ENCODE measurements at regions of chr12 and their contacts with region 1.

Region 1: GRCh38 chr12:57063991-57064685 is 14.2 kb upstream of the MYO1A start:
- DNase-seq: no peak
- H3K4me3 Mint-ChIP-seq: no peak overlapping the region
- H3K27ac Mint-ChIP-seq: no peak overlapping the region
- H3K4me1 Mint-ChIP-seq: no peaks in the 10 kb centered on the region
- H3K27me3 Mint-ChIP-seq: no peaks in the 10 kb centered on the region
- CTCF ChIP-seq: no peak

Region 2: DNA sequence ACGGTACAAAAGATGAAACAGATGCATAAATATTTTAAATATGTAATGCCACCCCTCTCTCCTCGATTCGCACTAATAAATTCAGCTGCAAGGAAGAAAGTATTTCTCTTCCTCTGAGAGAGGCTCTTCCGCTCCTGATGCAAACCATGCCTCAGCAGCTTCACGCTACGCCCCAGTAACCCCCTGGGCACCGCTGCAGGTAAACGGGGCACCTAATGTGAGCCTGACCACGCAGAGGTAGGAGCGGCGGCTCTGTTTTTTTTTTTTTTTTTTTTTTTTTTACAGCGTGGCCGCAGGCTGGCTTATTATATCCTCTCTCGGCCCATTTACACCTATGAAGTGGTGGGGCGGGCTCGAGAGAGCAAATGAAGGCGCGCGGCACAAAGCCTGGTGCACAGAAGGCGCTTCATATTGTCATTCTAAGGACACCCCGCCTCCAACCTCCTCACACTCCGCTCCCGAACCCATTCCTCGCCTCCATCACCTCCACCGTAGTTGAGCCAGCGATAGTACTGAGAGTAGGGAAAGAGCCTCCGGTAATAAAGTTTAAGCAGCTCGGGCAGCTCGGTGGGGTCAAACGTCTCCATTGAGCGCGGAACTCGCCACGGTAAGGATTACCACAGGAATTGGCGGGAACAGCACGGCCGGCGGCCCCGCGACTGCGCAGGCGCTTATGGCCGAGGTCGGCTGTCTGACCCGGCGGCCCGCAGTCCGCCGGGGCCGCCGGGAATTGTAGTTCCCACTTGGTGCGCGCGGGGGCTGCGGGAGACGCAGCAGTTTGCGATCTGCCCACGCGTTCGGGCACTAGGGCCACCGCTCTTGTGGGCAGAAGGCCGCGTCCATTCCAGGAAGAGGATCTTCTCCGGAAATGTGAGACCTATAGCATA is 312.2 kb before region 1 on chr12 and contains the start of gene PRIM1:
- CTCF ChIA-PET with region 1: interaction called, 5 read pairs
- POLR2A ChIA-PET with region 1: no interaction called
- intact Hi-C with region 1: loop called (anchors 1 kb)
- DNase-seq: peak; percentile 80
- H3K4me3 Mint-ChIP-seq: peak within 1 kb of the TSS; percentile 87
- H3K27ac Mint-ChIP-seq: peak within 1 kb of the TSS; percentile 59
- H3K4me1 Mint-ChIP-seq: peaks cover 20% of the 10 kb centered on the region
- H3K27me3 Mint-ChIP-seq: no peaks in the 10 kb centered on the region
- CTCF ChIP-seq: peak; percentile 63
- total RNA-seq, gene PRIM1: 3.5 and 7.8 TPM in 2 replicates

Region 3: DNA sequence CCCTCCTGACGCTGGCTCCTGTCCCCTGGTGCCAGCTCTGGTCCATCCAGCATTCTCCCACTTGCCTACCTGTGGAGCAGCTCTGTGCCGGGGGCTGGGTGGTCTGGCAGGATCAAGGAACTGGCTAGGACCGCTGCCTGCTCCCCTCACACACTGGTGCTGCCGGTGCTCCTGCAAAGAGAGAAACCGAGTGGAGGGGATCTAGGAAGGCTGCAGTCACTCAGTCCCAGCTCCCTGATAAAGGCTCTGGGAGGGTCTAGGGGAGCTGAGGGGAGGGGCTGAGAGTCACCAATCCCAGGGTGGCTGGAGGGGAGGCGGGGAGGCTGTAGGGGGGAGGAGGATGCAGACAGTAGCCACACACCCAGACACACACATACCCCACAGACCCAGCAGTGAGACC is 47.8 kb before region 1 on chr12 and contains the start of gene TAC3:
- CTCF ChIA-PET with region 1: interaction called, 231 read pairs
- POLR2A ChIA-PET with region 1: no interaction called
- intact Hi-C with region 1: no loop called
- DNase-seq: no peak
- H3K4me3 Mint-ChIP-seq: no peak within 1 kb of the TSS
- H3K27ac Mint-ChIP-seq: no peak within 1 kb of the TSS
- H3K4me1 Mint-ChIP-seq: no peaks in the 10 kb centered on the region
- H3K27me3 Mint-ChIP-seq: peaks cover 40% of the 10 kb centered on the region
- CTCF ChIP-seq: no peak
- total RNA-seq, gene TAC3: not detected in 2 replicates

Region 4: DNA sequence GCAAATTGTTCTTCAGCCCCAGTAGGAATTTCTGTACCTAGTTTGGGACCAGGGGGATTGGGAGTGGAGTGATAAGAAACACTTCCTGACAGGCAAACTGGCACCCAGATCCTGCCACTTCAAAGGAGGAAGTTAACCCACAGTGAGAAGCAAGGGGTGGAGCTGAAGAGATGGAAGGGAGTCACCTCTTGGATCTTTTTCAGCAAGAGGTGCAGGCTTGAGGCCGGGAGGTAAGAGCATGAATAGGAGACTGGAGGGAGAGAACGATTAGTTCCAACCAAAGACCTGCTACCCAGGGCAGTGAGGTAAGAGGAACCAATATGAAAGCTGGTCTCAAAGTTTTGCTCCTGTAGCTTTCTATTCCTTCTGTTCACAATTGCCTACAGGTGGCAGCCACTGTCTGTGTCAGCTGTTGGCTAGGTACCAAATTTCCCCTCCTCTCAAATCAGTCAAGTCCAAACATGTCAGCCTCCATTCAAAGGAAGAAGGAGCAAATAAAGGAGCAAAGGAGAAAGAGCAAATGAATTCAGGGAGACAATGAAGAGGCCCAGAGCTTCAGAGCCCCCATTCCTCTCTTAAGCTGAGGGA is 32.9 kb before region 1 on chr12:
- CTCF ChIA-PET with region 1: interaction called, 71 read pairs
- POLR2A ChIA-PET with region 1: interaction called, 21 read pairs
- intact Hi-C with region 1: no loop called
- DNase-seq: peak; percentile 81
- H3K4me3 Mint-ChIP-seq: peak overlapping the region; percentile 41
- H3K27ac Mint-ChIP-seq: peak overlapping the region; percentile 76
- H3K4me1 Mint-ChIP-seq: peaks cover 30% of the 10 kb centered on the region
- H3K27me3 Mint-ChIP-seq: peaks cover 21% of the 10 kb centered on the region
- CTCF ChIP-seq: no peak

Region 5: GRCh38 chr12:57116580-57117281 is 52.6 kb after region 1 on chr12:
- CTCF ChIA-PET with region 1: interaction called, 112 read pairs
- POLR2A ChIA-PET with region 1: interaction called, 146 read pairs
- intact Hi-C with region 1: loop called (anchors 1 kb)
- DNase-seq: no peak
- H3K4me3 Mint-ChIP-seq: no peak overlapping the region
- H3K27ac Mint-ChIP-seq: no peak overlapping the region
- H3K4me1 Mint-ChIP-seq: peaks cover 34% of the 10 kb centered on the region
- H3K27me3 Mint-ChIP-seq: no peaks in the 10 kb centered on the region
- CTCF ChIP-seq: no peak